Dendritic cell treated with granulocyte-macrophage colony-stimulating factor and Interleukin-4, amounts not matched to agents 40 ng/mL and 50 ng/mL, for 4 days (primary cell): ENCODE measurements at regions of chr10 and their contacts with region 1.

Region 1: GRCh38 chr10:80460399-80461207 is 6.5 kb downstream of the TSPAN14 start:
- H3K4me3 Mint-ChIP-seq: peak overlapping the region; percentile 77
- H3K27ac Mint-ChIP-seq: peak overlapping the region; percentile 91
- H3K4me1 Mint-ChIP-seq: peaks cover 99% of the 10 kb centered on the region
- H3K27me3 Mint-ChIP-seq: no peaks in the 10 kb centered on the region

Region 2: DNA sequence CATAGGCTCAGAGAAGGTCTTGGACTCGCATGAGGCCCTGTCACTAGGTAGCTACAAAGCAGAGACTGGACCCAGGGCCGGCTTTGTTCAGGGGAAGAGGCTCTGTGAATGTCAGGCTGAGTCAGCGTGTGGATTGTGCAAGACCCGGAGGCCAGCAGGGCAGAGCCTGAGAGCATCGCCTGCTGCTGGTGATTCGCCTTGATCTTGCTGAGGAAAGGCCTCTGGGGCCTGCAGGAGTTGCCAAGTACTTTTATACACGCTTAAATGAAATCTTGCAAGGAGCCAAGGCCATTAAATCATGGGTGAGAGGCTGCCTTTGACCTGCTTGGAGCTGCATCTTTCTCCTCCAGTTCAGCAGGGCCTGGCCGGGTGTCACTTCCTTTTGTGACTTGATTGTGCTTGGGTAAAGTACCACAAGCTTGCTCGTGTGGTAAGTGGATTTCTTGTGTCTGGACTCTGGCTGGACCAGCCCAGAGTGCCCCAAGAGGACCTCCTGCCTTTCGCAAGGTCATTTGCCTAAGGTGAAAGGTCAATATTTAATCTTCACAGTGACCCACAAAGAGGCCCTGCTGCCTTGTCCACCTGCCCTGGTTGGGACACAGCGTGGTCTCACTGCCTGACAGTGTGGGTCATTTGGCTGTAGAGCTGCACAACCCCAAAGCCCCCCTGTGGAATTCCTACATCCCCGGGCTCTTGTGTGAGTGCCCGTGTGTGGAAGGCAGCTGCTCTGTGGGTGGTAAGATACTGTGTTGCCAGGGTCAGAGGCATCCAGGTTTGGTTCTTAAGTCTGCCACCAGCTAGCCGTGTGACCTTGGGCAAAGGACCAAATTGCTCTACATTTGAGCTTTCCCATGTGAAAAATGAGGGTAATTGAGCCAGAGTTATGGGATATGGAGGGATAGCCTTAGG is 38.5 kb after region 1 on chr10:
- intact Hi-C with region 1: loop called (anchors 5 kb)
- H3K4me3 Mint-ChIP-seq: peak overlapping the region; percentile 15
- H3K27ac Mint-ChIP-seq: peak overlapping the region; percentile 81
- H3K4me1 Mint-ChIP-seq: peaks cover 97% of the 10 kb centered on the region
- H3K27me3 Mint-ChIP-seq: no peaks in the 10 kb centered on the region